ENCODE measurements at regions of chr2 and their contacts with region 1.

Region 1: DNA sequence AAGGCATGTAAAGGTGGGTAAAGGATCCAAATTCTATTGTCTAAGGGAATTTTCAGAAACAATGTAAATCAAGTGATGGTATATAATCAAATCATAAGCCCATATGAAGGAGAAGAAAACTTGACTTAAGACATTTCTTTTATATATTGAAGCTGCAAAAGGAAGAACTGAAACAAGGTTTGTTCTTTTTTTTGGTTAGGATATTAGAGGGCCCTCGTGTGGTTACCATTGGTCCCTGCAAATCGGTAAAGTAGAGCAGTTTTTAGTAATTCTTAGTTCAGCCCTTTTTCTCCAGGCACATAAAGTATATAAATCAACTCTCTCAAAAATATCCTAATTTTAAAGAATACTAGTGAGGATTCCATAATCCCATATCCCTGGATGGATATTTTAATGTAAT is 105.6 kb upstream of the STK17B start:
- DNase-seq: no peak
- ATAC-seq: peak; percentile 48
- H3K4me3 ChIP-seq: no peak overlapping the region
- H3K27ac ChIP-seq: no peak overlapping the region
- H3K4me1 ChIP-seq: peaks cover 27% of the 10 kb centered on the region
- H3K27me3 ChIP-seq: no peaks in the 10 kb centered on the region
- CTCF ChIP-seq: peak; percentile 61 to 72 (median 66); a peak in 5 of 6 replicates
- EP300 ChIP-seq: no peak
- POLR2A ChIP-seq: no peak
- RAD21 ChIP-seq: peak; percentile 82

Region 2: GRCh38 chr2:196088203-196088602 is 188.8 kb before region 1 on chr2:
- CTCF ChIA-PET with region 1: interaction called, 7 read pairs
- POLR2A ChIA-PET with region 1: no interaction called
- RAD21 ChIA-PET with region 1: interaction called, 4 read pairs
- SMC1A ChIA-PET with region 1: interaction called, 10 read pairs
- in situ Hi-C with region 1: loop called (anchors 5 kb)
- intact Hi-C with region 1: no loop called
- DNase-seq: no peak
- ATAC-seq: no peak
- H3K4me3 ChIP-seq: no peak overlapping the region
- H3K27ac ChIP-seq: no peak overlapping the region
- H3K4me1 ChIP-seq: peaks cover 4% of the 10 kb centered on the region; the same call in 1 of the 2 replicates
- H3K27me3 ChIP-seq: no peaks in the 10 kb centered on the region
- CTCF ChIP-seq: no peak
- EP300 ChIP-seq: no peak
- POLR2A ChIP-seq: no peak
- RAD21 ChIP-seq: no peak

Region 3: GRCh38 chr2:196149948-196150347 is 127.1 kb before region 1 on chr2:
- CTCF ChIA-PET with region 1: interaction called, 5 read pairs
- POLR2A ChIA-PET with region 1: no interaction called
- RAD21 ChIA-PET with region 1: interaction called, 4 read pairs
- SMC1A ChIA-PET with region 1: interaction called, 11 read pairs
- in situ Hi-C with region 1: loop called (anchors 25 kb)
- intact Hi-C with region 1: no loop called
- DNase-seq: no peak
- ATAC-seq: peak; percentile 68
- H3K4me3 ChIP-seq: peak overlapping the region; percentile 24; the same call in 1 of the 2 replicates
- H3K27ac ChIP-seq: peak overlapping the region; percentile 64
- H3K4me1 ChIP-seq: peaks cover 13% of the 10 kb centered on the region
- H3K27me3 ChIP-seq: no peaks in the 10 kb centered on the region
- CTCF ChIP-seq: no peak
- EP300 ChIP-seq: 0 out of 4 replicates have a peak, but pooled peaks of 1 of the 2 experiments have one; percentile 16
- POLR2A ChIP-seq: no peak
- RAD21 ChIP-seq: no peak

Region 4: DNA sequence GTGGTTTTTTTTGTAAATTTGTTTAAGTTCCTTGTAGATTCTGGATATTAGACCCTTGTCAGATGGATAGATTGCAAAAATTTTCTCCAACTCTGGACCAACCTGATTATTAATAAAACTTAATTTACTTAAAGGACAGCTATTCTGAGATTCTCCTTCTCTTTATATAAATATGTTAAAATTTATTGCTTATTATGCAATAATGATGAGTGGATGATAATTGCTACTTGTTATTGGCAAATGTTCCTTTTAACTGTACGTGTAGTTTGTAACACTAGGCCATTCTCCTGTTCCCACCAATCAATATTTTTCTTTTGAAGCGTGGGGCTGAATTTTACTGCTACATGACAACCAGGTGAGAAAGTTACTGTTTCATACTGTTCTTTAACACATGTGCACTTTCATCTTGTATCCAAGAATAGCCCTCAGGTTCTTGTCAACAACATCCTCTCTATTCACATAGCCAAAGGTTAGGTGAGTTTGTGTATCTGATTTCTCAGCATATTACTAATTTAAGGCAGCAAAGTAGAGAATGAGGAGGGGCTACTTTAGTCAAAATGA is 89.0 kb before region 1 on chr2:
- CTCF ChIA-PET with region 1: interaction called, 10 read pairs
- POLR2A ChIA-PET with region 1: interaction called, 5 read pairs
- RAD21 ChIA-PET with region 1: interaction called, 56 read pairs
- SMC1A ChIA-PET with region 1: interaction called, 36 read pairs
- in situ Hi-C with region 1: no loop called
- intact Hi-C with region 1: no loop called
- DNase-seq: no peak
- ATAC-seq: peak; percentile 29; the same call in 2 of the 3 replicates
- H3K4me3 ChIP-seq: no peak overlapping the region
- H3K27ac ChIP-seq: no peak overlapping the region
- H3K4me1 ChIP-seq: peaks cover 7% of the 10 kb centered on the region
- H3K27me3 ChIP-seq: no peaks in the 10 kb centered on the region
- CTCF ChIP-seq: no peak
- EP300 ChIP-seq: 0 out of 4 replicates have a peak, but pooled peaks of 1 of the 2 experiments have one; percentile 14
- POLR2A ChIP-seq: no peak
- RAD21 ChIP-seq: no peak

Region 5: DNA sequence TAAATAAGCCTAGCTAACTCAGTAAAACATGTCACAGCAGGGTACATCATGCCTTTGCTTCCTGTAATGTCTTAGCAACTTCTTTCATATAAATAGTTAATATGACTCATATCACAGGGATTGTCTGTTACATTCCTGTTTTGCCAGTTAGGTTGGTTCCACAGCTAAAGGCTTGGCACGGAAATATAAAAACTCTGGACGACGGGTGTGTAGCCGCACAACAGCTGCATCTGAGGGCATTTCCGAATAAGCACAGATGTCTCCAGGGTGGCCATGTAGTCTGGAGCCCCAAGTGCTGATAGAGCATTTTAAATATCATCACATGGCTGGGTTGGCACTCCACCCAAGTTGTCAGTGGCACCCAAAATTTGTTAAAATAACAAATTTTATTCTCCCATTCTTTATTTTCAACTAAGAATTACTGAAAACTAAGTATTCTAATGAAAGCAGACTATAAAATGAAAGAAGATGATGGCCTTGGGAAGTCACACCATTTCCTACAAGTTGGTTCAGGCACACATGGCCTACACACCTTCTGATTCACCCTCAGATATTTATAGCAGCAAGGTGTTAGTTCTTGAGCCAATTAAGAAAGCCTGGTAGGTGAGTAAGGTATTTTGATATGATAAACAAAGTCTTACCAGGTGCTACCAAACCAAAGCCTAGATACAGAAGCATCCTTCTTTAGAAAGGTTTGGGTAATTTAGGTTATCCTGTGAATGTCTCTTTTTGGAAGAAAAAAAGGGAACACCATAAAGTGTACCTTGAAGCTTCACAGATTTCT is 43.8 kb before region 1 on chr2:
- CTCF ChIA-PET with region 1: interaction called, 23 read pairs
- POLR2A ChIA-PET with region 1: interaction called, 9 read pairs
- RAD21 ChIA-PET with region 1: interaction called, 102 read pairs
- SMC1A ChIA-PET with region 1: interaction called, 84 read pairs
- in situ Hi-C with region 1: no loop called
- intact Hi-C with region 1: no loop called
- DNase-seq: no peak
- ATAC-seq: peak; percentile 26
- H3K4me3 ChIP-seq: no peak overlapping the region
- H3K27ac ChIP-seq: peak overlapping the region; percentile 50; the same call in 1 of the 2 replicates
- H3K4me1 ChIP-seq: peaks cover 14% of the 10 kb centered on the region
- H3K27me3 ChIP-seq: no peaks in the 10 kb centered on the region
- CTCF ChIP-seq: no peak
- EP300 ChIP-seq: no peak
- POLR2A ChIP-seq: no peak
- RAD21 ChIP-seq: no peak

Region 6: DNA sequence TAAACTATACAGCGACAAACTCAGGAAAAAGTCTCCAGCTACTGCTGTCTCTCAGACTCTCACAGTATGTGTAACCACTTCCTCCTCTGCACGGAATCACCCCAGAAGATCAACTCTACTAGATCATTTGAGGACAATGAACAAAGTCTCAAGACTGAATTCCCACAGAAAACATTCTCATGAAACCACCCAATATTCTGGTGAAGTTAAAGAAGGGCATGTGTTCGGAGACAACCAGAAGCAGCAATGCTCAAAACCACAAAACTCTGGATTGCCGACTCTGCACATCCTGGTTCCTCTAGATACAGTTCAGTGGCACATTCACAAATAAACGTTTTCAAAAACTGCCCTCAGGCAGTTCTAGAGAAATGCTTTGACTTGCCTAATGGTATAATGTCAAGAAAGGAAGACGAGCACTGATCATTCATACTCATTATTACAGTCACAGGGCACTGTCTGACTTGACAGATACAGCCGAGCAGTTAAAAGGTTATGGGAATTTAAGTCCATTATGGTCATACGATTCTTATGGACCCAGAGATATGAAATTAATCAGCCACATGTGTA is 13.7 kb before region 1 on chr2:
- CTCF ChIA-PET with region 1: interaction called, 10 read pairs
- POLR2A ChIA-PET with region 1: no interaction called
- RAD21 ChIA-PET with region 1: interaction called, 23 read pairs
- SMC1A ChIA-PET with region 1: interaction called, 35 read pairs
- in situ Hi-C with region 1: no loop called
- intact Hi-C with region 1: no loop called
- DNase-seq: peak; percentile 88
- ATAC-seq: peak; percentile 94
- H3K4me3 ChIP-seq: 0 out of 2 replicates have a peak overlapping the region, but pooled peaks have one; percentile 7
- H3K27ac ChIP-seq: peak overlapping the region; percentile 75
- H3K4me1 ChIP-seq: peaks cover 9% of the 10 kb centered on the region
- H3K27me3 ChIP-seq: no peaks in the 10 kb centered on the region
- CTCF ChIP-seq: no peak
- EP300 ChIP-seq: peak; percentile 20 to 52; a peak in 2 of 4 replicates
- POLR2A ChIP-seq: 0 out of 2 replicates have a peak, but pooled peaks have one; percentile 31
- RAD21 ChIP-seq: no peak